CD8-positive, alpha-beta T cell (primary cell): ENCODE measurements at regions of chr2 and their contacts with region 1.

Region 1: DNA sequence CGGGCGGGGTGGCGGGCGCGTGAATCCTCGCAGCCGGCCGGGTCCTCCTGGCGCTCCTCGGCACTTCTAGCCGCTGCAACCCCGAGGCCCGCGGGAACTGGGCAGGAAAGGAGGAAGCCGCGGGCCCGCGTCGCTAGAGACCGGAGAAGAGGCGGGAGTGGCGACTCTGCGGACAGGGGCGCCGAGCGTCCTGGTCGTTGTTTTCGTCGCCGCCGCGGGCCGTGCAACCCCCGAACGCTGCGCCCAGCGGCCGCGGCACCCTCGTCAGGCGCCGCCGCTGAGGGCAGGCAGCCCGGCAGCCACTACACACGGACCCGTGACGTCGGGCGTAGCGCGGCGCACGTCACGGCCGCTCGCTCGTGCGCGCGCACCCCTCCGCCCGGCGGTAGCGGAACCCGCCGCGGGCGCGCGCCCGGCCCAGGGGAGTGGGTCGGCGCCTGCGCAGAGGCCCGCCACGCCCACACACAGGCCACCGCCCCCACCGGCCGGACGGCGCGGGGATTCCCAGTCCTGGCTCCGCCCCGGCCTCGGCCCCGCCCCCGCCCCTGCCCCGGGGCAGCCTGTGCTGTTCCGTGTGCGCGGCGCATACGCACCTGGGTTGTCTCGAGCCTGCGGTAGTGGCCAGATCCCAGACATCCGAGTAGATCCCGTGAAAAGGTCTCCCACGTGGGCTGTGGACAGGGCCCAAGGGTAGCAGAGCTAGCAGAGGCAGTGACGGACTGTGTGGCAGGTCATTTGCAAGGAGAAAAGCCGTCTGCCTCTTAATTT is at the start of gene MAP3K2:
- DNase-seq: peak; percentile 90 to 98 (median 97)
- ATAC-seq: peak; percentile 72
- H3K4me3 ChIP-seq: peak within 1 kb of the TSS; percentile 79 to 81
- H3K4me3 Mint-ChIP-seq: peak within 1 kb of the TSS; percentile 86
- H3K27ac ChIP-seq: peak within 1 kb of the TSS; percentile 99
- H3K27ac Mint-ChIP-seq: peak within 1 kb of the TSS; percentile 99
- H3K4me1 ChIP-seq: peaks cover 36% of the 10 kb centered on the region
- H3K4me1 Mint-ChIP-seq: peaks cover 63% of the 10 kb centered on the region
- H3K27me3 ChIP-seq: no peaks in the 10 kb centered on the region
- H3K27me3 Mint-ChIP-seq: no peaks in the 10 kb centered on the region
- CTCF ChIP-seq: no peak
- total RNA-seq, gene MAP3K2: 126 to 137 TPM

Region 2: DNA sequence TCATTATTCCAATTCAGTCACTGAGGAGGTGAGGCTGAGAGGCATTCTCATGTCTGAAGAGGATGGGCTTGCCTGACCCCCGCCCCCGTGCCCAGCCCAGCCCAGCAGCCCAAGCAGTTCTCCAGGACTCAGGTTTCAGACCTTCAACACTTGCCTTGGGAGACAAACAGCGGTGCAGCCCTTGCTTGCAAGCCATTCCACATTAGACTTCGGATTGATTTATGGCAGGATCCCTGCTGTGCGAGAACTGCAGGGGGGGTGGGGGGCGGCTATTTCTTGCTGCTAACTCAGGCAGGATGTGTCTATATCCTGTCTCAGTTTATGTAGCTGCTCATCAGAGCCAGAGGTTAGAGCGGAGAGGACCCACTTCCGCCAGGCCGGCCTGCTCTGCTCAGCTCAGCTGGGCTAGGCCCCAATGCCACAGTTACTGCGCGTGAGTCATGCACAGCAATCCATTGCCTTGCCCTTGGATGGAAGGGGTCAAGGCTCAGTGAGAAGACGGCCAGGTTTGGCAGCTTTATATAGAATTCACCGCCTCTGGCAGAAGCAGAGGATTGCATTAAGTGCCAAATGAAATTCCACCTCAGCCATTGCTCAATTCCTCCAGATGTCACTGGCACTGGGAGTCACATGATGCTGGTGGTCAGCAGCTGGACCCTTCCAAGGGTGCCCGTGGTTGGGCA is 730.1 kb before region 1 on chr2:
- CTCF ChIA-PET with region 1: no interaction called
- POLR2A ChIA-PET with region 1: no interaction called
- intact Hi-C with region 1: loop called in 1 of 2 experiments (anchors 10 kb)
- DNase-seq: peak; percentile 49 to 89 (median 79)
- ATAC-seq: peak; percentile 62
- H3K4me3 ChIP-seq: peak overlapping the region; percentile 80 to 96
- H3K4me3 Mint-ChIP-seq: peak overlapping the region; percentile 94
- H3K27ac ChIP-seq: peak overlapping the region; percentile 87 to 89
- H3K27ac Mint-ChIP-seq: peak overlapping the region; percentile 98
- H3K4me1 ChIP-seq: peaks cover 59% of the 10 kb centered on the region
- H3K4me1 Mint-ChIP-seq: peaks cover 75% of the 10 kb centered on the region
- H3K27me3 ChIP-seq: no peaks in the 10 kb centered on the region
- H3K27me3 Mint-ChIP-seq: no peaks in the 10 kb centered on the region
- CTCF ChIP-seq: no peak

Region 3: GRCh38 chr2:127342101-127342500 is 45.7 kb before region 1 on chr2:
- CTCF ChIA-PET with region 1: interaction called, 3 read pairs
- POLR2A ChIA-PET with region 1: no interaction called
- intact Hi-C with region 1: loop called in 1 of 2 experiments (anchors 5 kb)
- DNase-seq: no peak
- ATAC-seq: no peak
- H3K4me3 ChIP-seq: no peak overlapping the region
- H3K4me3 Mint-ChIP-seq: no peak overlapping the region
- H3K27ac ChIP-seq: no peak overlapping the region
- H3K27ac Mint-ChIP-seq: no peak overlapping the region
- H3K4me1 ChIP-seq: no peaks in the 10 kb centered on the region
- H3K4me1 Mint-ChIP-seq: peaks cover 34% of the 10 kb centered on the region
- H3K27me3 ChIP-seq: no peaks in the 10 kb centered on the region
- H3K27me3 Mint-ChIP-seq: no peaks in the 10 kb centered on the region
- CTCF ChIP-seq: no peak

Region 4: DNA sequence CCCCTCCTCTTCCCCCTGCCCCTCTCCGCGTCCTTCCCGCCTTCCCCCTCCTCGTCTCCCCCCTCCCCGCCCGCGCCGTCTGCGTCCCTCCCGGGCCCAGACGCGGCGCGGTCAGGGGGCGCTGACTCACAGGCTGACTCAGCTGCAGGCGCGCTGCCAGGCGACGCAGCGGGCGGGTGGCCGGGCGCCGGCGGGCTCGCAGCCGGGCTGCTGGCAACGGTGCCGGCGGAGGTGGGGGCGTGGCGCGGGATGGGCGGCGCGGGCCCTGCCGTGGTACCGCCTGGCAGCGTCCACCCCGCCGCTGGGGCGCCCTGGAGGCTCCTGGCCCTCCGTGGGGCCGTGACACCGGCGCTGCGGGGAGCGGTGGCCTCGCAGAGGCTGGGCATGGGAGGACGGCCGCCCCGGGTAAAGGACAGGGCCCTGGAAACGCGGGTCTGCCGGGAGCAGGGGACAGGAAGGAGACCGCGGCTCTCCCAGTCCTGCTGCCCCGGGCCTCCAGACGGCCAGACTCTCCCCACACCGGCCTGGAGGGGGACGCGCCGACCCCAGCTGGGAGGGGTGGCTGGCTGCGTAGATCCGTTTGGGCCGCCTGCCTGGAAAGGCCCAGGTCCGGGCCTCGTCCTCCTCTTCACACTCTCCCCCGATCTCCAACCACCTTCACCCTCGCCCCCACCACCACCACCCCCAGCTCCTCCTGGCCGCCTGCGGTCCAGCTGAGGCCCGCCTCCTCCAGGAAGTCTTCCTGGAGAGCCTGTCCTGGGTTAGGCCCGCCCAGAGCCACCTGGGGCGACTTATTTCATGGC is 20.4 kb after region 1 on chr2:
- CTCF ChIA-PET with region 1: no interaction called
- POLR2A ChIA-PET with region 1: interaction called, 5 read pairs
- intact Hi-C with region 1: loop called (anchors 1 kb)
- DNase-seq: peak; percentile 73 to 95 (median 90)
- ATAC-seq: peak; percentile 88
- H3K4me3 ChIP-seq: peak overlapping the region; percentile 16 to 44
- H3K4me3 Mint-ChIP-seq: peak overlapping the region; percentile 65
- H3K27ac ChIP-seq: peak overlapping the region in 1 of 2 experiments; percentile 37
- H3K27ac Mint-ChIP-seq: no peak overlapping the region
- H3K4me1 ChIP-seq: peaks cover 5% of the 10 kb centered on the region
- H3K4me1 Mint-ChIP-seq: peaks cover 12% of the 10 kb centered on the region
- H3K27me3 ChIP-seq: no peaks in the 10 kb centered on the region
- H3K27me3 Mint-ChIP-seq: no peaks in the 10 kb centered on the region
- CTCF ChIP-seq: no peak

Region 5: DNA sequence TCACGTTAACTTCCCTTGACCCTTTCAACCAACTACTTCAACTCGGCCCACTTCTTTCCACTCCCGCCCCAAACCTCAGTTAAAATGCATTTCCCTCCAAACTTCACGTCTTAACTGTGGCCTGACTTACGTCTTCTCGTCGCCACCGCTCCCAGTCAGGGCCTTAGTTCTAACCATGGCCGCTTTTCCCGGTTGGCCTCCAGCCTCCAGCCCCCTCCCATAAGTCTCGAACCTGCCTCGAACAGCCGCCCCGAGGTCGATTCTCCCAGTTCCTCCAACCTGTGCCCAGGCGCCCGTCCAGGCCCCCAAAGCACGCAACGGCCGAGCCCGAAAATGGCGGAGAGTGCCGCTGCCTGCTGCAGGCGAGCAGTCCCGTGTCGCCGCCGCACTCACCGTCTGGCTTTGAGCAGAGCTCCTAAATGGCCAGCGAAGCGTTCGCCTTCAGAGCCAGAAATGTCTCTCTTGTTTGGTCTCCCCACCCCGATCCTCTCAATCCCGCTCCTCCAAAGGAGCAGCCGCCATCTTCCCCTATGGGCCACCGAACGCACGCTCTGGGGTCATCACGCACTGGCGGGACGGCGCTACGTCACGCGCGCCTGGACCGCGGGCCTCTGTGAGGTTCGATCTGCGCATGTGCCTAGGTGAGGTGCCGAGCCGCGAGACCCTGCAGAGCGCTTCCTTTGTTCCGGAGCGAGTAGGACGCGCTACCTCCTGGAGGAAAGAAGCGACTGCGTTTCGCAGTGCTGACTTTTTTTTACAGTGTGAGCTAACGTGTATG is 423.0 kb after region 1 on chr2 and contains the start of gene WDR33:
- CTCF ChIA-PET with region 1: no interaction called
- POLR2A ChIA-PET with region 1: no interaction called
- intact Hi-C with region 1: loop called in 1 of 2 experiments (anchors 10 kb)
- DNase-seq: peak; percentile 87 to 98 (median 95)
- ATAC-seq: peak; percentile 95
- H3K4me3 ChIP-seq: peak within 1 kb of the TSS; percentile 88 to 92
- H3K4me3 Mint-ChIP-seq: peak within 1 kb of the TSS; percentile 92
- H3K27ac ChIP-seq: peak within 1 kb of the TSS; percentile 95 to 98
- H3K27ac Mint-ChIP-seq: peak within 1 kb of the TSS; percentile 98
- H3K4me1 ChIP-seq: peaks cover 42% of the 10 kb centered on the region
- H3K4me1 Mint-ChIP-seq: peaks cover 51% of the 10 kb centered on the region
- H3K27me3 ChIP-seq: no peaks in the 10 kb centered on the region
- H3K27me3 Mint-ChIP-seq: no peaks in the 10 kb centered on the region
- CTCF ChIP-seq: no peak
- total RNA-seq, gene WDR33: 60.3 to 61.0 TPM

Region 6: GRCh38 chr2:127950264-127950663 is 562.4 kb after region 1 on chr2:
- CTCF ChIA-PET with region 1: no interaction called
- POLR2A ChIA-PET with region 1: no interaction called
- intact Hi-C with region 1: no loop called
- DNase-seq: no peak
- ATAC-seq: no peak
- H3K4me3 ChIP-seq: no peak overlapping the region
- H3K4me3 Mint-ChIP-seq: no peak overlapping the region
- H3K27ac ChIP-seq: no peak overlapping the region
- H3K27ac Mint-ChIP-seq: no peak overlapping the region
- H3K4me1 ChIP-seq: no peaks in the 10 kb centered on the region
- H3K4me1 Mint-ChIP-seq: no peaks in the 10 kb centered on the region
- H3K27me3 ChIP-seq: no peaks in the 10 kb centered on the region
- H3K27me3 Mint-ChIP-seq: no peaks in the 10 kb centered on the region
- CTCF ChIP-seq: no peak